ENCODE measurements at regions of chr1 and their contacts with region 1.

Region 1: DNA sequence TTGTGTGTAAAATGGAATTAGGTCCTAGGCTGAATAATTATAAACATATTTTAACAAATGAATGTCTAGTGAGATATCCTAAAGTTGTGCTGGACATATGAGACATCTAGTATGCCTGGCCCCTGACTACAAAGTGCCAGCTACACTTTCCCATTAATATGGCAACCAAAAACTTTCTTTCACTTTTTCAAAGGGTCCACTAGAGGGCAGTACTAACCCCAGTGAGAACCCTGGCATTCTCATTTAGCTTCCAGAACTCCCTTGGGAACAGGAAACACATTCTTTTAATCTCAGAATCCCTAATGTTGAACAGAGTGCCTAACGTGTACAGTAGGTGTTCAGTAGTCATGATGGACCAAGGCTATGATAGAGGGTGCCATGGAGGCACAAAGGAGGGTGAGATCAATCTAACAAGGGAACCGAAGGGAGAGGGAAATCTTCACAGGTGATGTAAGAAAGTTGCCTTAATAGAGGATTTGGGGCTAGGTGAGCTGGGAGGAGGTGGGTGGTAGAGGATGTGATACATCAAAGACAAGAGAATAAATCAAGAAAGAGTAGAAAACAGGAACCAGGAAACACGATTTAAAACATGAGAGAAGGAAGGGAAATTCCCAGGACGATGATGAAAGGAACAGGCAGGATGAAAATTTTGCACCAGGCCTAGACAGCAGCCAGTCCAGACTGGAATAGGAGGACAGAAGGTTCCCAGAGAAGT is 41.6 kb downstream of the NSL1 start:
- DNase-seq: peak; percentile 12 to 39 (median 26)
- H3K4me3 ChIP-seq: peak overlapping the region in 1 of 2 donors; percentile 12
- H3K4me3 Mint-ChIP-seq: peak overlapping the region in 6 of 8 donors; percentile 2 to 69 (median 28)
- H3K27ac ChIP-seq: peak overlapping the region; percentile 33
- H3K27ac Mint-ChIP-seq: peak overlapping the region; percentile 12 to 93 (median 84)
- H3K4me1 ChIP-seq: peaks cover 47% of the 10 kb centered on the region
- H3K4me1 Mint-ChIP-seq: peaks cover 37 to 46% (median 42%) of the 10 kb centered on the region in 4 donors
- H3K27me3 ChIP-seq: no peaks in the 10 kb centered on the region
- H3K27me3 Mint-ChIP-seq: no peaks in the 10 kb centered on the region

Region 2: GRCh38 chr1:212699104-212699624 is 50.8 kb before region 1 on chr1:
- CTCF ChIA-PET with region 1: interaction called, 11 read pairs
- POLR2A ChIA-PET with region 1: no interaction called
- intact Hi-C with region 1: loop called (anchors 2 kb)
- DNase-seq: peak; percentile 29 to 56 (median 35)
- H3K4me3 ChIP-seq: peak overlapping the region; percentile 13 to 46
- H3K4me3 Mint-ChIP-seq: peak overlapping the region; percentile 86 to 90 (median 88)
- H3K27ac ChIP-seq: no peak overlapping the region
- H3K27ac Mint-ChIP-seq: peak overlapping the region in 6 of 7 donors; percentile 11 to 87 (median 78)
- H3K4me1 ChIP-seq: peaks cover 42% of the 10 kb centered on the region
- H3K4me1 Mint-ChIP-seq: peaks cover 34 to 61% (median 49%) of the 10 kb centered on the region in 4 donors
- H3K27me3 ChIP-seq: no peaks in the 10 kb centered on the region
- H3K27me3 Mint-ChIP-seq: no peaks in the 10 kb centered on the region

Region 3: DNA sequence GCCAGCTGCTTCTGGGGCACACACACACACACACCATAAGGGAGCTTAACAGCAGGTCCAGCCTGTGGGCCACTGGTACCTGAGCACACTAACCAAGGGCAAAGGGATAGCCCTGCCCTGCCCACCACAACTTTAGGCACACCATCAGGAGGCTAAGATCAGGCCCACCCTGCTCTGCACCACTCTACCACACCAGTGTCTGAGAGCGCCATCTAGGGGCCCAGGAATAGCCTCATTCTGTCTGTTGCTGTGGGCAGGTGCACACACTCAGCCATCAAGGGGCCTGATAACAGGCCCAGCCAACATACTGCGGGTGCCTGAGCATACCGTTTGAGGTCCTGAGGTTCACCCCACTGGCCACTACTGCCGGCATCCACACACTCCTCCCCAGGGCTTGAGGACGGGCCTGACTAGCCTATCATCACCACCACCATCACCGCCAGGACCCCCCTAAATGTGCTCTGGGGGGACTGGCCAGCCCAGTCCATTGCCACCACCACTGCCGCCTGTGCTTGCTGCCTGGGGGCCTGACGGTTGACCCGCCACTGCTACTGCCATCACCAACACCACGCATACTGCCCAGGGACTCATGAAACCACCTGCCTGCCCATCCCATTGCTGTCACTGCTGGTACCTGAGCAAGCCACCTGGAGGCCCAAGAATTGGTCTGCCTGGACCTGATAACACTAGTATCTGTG is 10.3 kb after region 1 on chr1:
- CTCF ChIA-PET with region 1: interaction called, 14 read pairs
- POLR2A ChIA-PET with region 1: no interaction called
- intact Hi-C with region 1: no loop called
- DNase-seq: peak; percentile 14 to 46 (median 20)
- H3K4me3 ChIP-seq: no peak overlapping the region
- H3K4me3 Mint-ChIP-seq: no peak overlapping the region
- H3K27ac ChIP-seq: no peak overlapping the region
- H3K27ac Mint-ChIP-seq: no peak overlapping the region
- H3K4me1 ChIP-seq: no peaks in the 10 kb centered on the region
- H3K4me1 Mint-ChIP-seq: peaks cover 9 to 31% (median 24%) of the 10 kb centered on the region in 4 donors
- H3K27me3 ChIP-seq: no peaks in the 10 kb centered on the region
- H3K27me3 Mint-ChIP-seq: no peaks in the 10 kb centered on the region

Region 4: GRCh38 chr1:212782422-212783154 is 32.6 kb after region 1 on chr1:
- CTCF ChIA-PET with region 1: interaction called, 14 read pairs
- POLR2A ChIA-PET with region 1: no interaction called
- intact Hi-C with region 1: no loop called
- DNase-seq: peak in 4 of 5 donors; percentile 29 to 38 (median 32)
- H3K4me3 ChIP-seq: no peak overlapping the region
- H3K4me3 Mint-ChIP-seq: peak overlapping the region in 1 of 8 donors; percentile 10
- H3K27ac ChIP-seq: no peak overlapping the region
- H3K27ac Mint-ChIP-seq: peak overlapping the region in 3 of 7 donors; percentile 12 to 29 (median 17)
- H3K4me1 ChIP-seq: no peaks in the 10 kb centered on the region
- H3K4me1 Mint-ChIP-seq: peaks cover 2 to 8% (median 6%) of the 10 kb centered on the region in 4 donors
- H3K27me3 ChIP-seq: no peaks in the 10 kb centered on the region
- H3K27me3 Mint-ChIP-seq: no peaks in the 10 kb centered on the region

Region 5: DNA sequence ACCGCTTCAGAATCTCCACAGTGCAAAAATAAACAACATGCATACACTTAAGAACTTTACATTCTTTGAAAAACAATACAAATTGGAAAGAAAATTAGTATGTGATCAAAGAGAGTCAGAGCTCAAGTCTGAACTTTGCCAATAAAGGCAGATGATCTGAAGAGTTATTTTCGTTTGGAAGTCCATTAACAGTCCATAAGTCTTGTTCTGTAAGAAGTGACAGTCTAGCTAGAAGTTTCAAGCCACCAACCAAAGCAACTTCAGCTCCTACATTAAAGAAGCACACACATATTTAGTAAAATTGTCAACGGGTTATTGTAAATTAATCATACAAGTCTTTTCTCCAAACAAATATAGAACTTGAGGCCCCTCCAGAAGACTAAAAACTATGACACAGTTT is 244.9 kb after region 1 on chr1:
- CTCF ChIA-PET with region 1: interaction called, 12 read pairs
- POLR2A ChIA-PET with region 1: no interaction called
- intact Hi-C with region 1: no loop called
- DNase-seq: no peak
- H3K4me3 ChIP-seq: no peak overlapping the region
- H3K4me3 Mint-ChIP-seq: no peak overlapping the region
- H3K27ac ChIP-seq: no peak overlapping the region
- H3K27ac Mint-ChIP-seq: no peak overlapping the region
- H3K4me1 ChIP-seq: no peaks in the 10 kb centered on the region
- H3K4me1 Mint-ChIP-seq: peaks cover 3 to 6% (median 5%) of the 10 kb centered on the region in 4 donors
- H3K27me3 ChIP-seq: no peaks in the 10 kb centered on the region
- H3K27me3 Mint-ChIP-seq: no peaks in the 10 kb centered on the region